Activated naive CD4-positive, alpha-beta T cell treated with anti-CD3 and anti-CD28 coated beads for 36 hours (primary cell): ENCODE measurements at regions of chr1 and their contacts with region 1.

Region 1: DNA sequence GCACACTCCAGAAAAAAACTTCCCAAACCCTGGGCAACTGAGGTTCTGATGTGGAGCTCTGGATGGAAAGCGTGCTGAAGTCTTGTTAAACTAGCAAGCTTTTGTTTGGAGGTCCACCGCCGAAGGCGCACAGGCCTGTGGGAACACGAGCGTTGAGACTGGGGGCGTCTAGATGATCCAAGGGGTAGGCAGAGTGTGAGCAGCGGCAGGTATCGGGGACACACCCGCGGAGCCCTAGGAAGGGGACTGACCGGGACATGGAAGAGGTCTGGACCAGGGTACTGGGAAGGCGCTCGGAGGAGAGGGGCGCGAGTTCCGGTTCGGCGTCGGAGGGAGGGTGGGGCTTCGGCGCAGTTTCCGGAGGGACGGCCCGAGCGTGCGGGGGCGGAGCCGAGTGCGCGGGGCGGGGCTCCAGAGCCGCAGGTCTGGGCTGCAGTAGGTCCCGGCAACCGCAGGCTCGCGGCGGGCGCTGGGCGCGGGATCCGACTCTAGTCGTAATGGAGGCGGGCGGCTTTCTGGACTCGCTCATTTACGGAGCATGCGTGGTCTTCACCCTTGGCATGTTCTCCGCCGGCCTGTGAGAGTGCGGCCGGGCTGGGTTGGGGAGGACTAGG is at the start of gene SLC50A1:
- DNase-seq: peak; percentile 96
- H3K4me3 Mint-ChIP-seq: peak within 1 kb of the TSS; percentile 99
- H3K27ac Mint-ChIP-seq: peak within 1 kb of the TSS; percentile 100
- H3K4me1 Mint-ChIP-seq: peaks cover 32% of the 10 kb centered on the region
- H3K27me3 Mint-ChIP-seq: no peaks in the 10 kb centered on the region
- total RNA-seq, gene SLC50A1: 48.4 to 52.7 TPM

Region 2: DNA sequence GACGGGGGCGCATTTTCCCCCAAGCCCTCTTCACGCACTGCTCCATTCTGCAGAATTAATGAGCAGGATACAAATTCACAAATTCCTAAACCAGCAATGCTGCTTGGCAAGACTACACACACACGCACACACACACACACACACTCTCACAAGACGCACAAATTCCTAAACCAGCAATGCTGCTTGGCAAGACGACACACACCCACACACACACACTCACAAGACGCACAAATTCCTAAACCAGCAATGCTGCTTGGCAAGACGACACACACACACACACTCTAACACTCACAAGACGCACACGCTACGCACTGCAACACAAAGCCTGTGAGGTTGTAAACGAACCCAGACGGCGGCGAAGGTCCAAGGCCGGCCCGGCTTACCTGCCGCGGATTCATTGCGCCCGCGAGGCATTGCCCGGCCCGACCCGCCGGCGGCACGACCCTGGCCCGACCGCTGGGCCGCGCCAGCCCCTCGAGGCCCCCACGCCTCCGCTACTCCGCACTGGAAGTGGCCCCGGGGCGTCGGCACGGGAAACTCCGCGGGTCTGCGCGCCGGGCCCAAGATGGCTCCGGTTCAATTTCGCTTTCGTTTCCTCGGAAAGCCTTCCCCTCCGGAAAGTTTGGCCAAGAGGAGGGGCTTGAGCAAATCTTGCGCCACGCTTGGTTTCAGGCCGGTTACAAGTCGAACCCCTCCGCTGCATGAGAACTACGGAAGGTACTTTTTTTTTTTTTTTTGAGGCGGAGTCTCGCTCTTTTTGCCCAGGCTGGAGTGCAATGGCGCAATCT is 527.7 kb before region 1 on chr1 and contains the start of gene ADAR:
- CTCF ChIA-PET with region 1: no interaction called
- intact Hi-C with region 1: loop called (anchors 5 kb)
- DNase-seq: peak; percentile 97
- H3K4me3 Mint-ChIP-seq: peak within 1 kb of the TSS; percentile 91
- H3K27ac Mint-ChIP-seq: peak within 1 kb of the TSS; percentile 96
- H3K4me1 Mint-ChIP-seq: peaks cover 75% of the 10 kb centered on the region
- H3K27me3 Mint-ChIP-seq: no peaks in the 10 kb centered on the region
- total RNA-seq, gene ADAR: 301 to 313 TPM

Region 3: GRCh38 chr1:154936555-154937084 is 198.9 kb before region 1 on chr1 and contains the start of gene PMVK:
- CTCF ChIA-PET with region 1: no interaction called
- intact Hi-C with region 1: loop called (anchors 5 kb)
- DNase-seq: peak; percentile 97
- H3K4me3 Mint-ChIP-seq: peak within 1 kb of the TSS; percentile 83
- H3K27ac Mint-ChIP-seq: peak within 1 kb of the TSS; percentile 97
- H3K4me1 Mint-ChIP-seq: peaks cover 47% of the 10 kb centered on the region
- H3K27me3 Mint-ChIP-seq: no peaks in the 10 kb centered on the region
- total RNA-seq, gene PMVK: 29.8 to 30.5 TPM

Region 4: GRCh38 chr1:155167166-155168104 is 31.9 kb after region 1 on chr1:
- CTCF ChIA-PET with region 1: interaction called, 10 read pairs
- intact Hi-C with region 1: no loop called
- DNase-seq: peak; percentile 95
- H3K4me3 Mint-ChIP-seq: peak overlapping the region; percentile 51
- H3K27ac Mint-ChIP-seq: no peak overlapping the region
- H3K4me1 Mint-ChIP-seq: peaks cover 24% of the 10 kb centered on the region
- H3K27me3 Mint-ChIP-seq: no peaks in the 10 kb centered on the region

Region 5: DNA sequence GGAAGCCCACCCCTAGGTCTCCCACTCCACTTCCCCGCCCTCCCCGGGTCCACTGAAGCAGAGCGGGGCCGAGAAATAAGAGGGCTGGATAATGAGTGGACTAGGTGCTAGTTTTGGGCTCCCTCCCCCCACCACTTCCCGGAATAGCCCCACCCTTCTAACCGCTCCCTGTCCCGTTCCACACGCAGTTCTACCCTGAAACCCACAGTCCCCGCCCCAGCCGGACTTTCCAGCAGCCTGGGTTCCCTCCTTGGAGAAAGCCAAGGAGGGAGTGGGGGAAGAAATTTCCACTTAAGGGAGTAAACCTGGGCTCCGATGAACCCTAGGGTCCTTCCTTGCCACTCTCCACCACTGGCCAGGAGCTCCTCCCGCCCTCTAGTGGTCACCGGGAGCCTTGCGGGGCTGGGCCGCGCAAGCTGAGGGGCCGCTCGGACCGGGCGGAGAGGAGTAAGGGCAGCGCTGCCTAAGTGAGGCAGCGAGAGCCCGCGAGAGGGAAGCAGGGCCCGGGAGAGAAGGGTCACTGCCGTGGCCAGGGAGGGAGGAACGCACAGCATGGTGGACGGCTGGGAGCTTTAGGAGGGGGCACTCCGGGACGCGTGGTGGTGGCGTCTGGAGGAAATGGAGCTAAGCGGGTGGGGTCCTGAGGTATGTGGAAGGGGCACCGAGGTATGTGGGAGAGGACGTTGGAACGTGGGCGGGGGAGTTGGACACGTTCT is 57.9 kb after region 1 on chr1:
- CTCF ChIA-PET with region 1: interaction called, 3 read pairs
- intact Hi-C with region 1: loop called (anchors 2 kb)
- DNase-seq: peak; percentile 86
- H3K4me3 Mint-ChIP-seq: peak overlapping the region; percentile 93
- H3K27ac Mint-ChIP-seq: peak overlapping the region; percentile 96
- H3K4me1 Mint-ChIP-seq: peaks cover 27% of the 10 kb centered on the region
- H3K27me3 Mint-ChIP-seq: no peaks in the 10 kb centered on the region